Activated CD4-positive, alpha-beta T cell treated with anti-CD3 and anti-CD28 coated beads for 36 hours (primary cell): ENCODE measurements at regions of chr19 and their contacts with region 1.

Region 1: DNA sequence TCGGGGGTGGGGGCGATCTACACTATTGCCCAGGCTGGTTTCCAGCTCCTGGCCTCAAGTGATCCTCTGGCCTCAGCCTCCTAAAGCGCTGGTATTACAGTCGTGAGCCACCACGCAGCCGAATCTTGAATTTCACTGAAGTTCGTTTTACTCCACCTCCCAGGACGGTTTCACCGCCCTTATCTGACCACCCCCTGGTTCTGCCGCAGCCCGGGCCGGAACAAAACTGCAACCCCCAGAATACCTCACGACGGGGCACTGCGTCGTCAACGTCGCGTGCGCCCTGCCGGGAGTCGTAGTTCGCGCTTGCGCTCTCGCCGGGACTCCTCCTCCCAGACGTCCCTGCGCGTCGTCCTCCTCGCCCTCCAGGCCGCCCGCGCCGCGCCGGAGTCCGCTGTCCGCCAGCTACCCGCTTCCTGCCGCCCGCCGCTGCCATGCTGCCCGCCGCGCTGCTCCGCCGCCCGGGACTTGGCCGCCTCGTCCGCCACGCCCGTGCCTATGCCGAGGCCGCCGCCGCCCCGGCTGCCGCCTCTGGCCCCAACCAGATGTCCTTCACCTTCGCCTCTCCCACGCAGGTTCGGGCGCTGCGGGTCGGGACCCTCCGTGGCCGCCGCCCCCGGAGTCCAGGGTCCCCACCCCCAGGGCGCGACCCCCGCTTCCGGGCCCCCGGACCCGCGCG is at the start of gene ATP5F1D:
- DNase-seq: peak; percentile 96
- ATAC-seq: peak; percentile 79
- H3K4me3 Mint-ChIP-seq: peak within 1 kb of the TSS; percentile 83
- H3K27ac Mint-ChIP-seq: peak within 1 kb of the TSS; percentile 86
- H3K4me1 Mint-ChIP-seq: peaks cover 38% of the 10 kb centered on the region
- H3K27me3 Mint-ChIP-seq: peaks cover 6% of the 10 kb centered on the region
- total RNA-seq, gene ATP5F1D: 161 to 180 TPM

Region 2: GRCh38 chr19:925526-926322 is 315.8 kb before region 1 on chr19 and contains the start of gene ARID3A:
- CTCF ChIA-PET with region 1: no interaction called
- POLR2A ChIA-PET with region 1: no interaction called
- intact Hi-C with region 1: loop called (anchors 1 to 10 kb)
- DNase-seq: peak; percentile 85
- ATAC-seq: peak; percentile 42
- H3K4me3 Mint-ChIP-seq: peak within 1 kb of the TSS; percentile 70
- H3K27ac Mint-ChIP-seq: peak within 1 kb of the TSS; percentile 37
- H3K4me1 Mint-ChIP-seq: peaks cover 17% of the 10 kb centered on the region
- H3K27me3 Mint-ChIP-seq: no peaks in the 10 kb centered on the region
- total RNA-seq, gene ARID3A: 25.1 to 36.0 TPM

Region 3: DNA sequence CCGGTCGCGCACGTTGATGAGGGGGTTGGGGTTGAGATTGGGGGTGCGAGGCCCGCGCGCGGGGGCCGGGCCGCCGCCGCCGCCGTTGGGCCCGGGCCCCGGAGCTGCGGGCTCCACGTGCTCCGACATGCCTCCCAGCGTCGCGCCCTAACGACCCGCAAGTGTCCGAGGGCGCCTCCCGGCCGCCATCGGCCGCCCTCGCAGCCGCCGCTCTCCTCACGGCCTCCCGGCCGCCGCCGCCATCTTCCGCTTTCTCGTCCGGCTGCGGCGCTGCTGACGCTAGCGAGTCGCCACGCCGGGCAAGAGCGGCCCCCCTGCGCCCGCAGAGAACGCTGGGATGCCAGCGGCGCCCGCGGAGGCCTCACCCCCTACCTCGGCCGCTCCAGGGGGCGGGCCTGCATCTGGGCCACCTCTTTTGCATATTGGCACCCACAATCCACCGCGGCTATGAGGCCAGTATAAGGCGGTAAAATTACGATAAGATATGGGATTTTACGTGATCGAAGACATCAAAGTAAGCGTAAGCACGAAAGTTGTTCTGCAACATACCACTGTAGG is 220.6 kb before region 1 on chr19 and contains the start of gene TMEM259:
- CTCF ChIA-PET with region 1: interaction called, 5 read pairs
- POLR2A ChIA-PET with region 1: interaction called, 4 read pairs
- intact Hi-C with region 1: loop called (anchors 1 kb)
- DNase-seq: peak; percentile 99
- ATAC-seq: peak; percentile 90
- H3K4me3 Mint-ChIP-seq: peak within 1 kb of the TSS; percentile 94
- H3K27ac Mint-ChIP-seq: peak within 1 kb of the TSS; percentile 96
- H3K4me1 Mint-ChIP-seq: peaks cover 35% of the 10 kb centered on the region
- H3K27me3 Mint-ChIP-seq: no peaks in the 10 kb centered on the region
- total RNA-seq, gene TMEM259: 106 to 128 TPM

Region 4: DNA sequence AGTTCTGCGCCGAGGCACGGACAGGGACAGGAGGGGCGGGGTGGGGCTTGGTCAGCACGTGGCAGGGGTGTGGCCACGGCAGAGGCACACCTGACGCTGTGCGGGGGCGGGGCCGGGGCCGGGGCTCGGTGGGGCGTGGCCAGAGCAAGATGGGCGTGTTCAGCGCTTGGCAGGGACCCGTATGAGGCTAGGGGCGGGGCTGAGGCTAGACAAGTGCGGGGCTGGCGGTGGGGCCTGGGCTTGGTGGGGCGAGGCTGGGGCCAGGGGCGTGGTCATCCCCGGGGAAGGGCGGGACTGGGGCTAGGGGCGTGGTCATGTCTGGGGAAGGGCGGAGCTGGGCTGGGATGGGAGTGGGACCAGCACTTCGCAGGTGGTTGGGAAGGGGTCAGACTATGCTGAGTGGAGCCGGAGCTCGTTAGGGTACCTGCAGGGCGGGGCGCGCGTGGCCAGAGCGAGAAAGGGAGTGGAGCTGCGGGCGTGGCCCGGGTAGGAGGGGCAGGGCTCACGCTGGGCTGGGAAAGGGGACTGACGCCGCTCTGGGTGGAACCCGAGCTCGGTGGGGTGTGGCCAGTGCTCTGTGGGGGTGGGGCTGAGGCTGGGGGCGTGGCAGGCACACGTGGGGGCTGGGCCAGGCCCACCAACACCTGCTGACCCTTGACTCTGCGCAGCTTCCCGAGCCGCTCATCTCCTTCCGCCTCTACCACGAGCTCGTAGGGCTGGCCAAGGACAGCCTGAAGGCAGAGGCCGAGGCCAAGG is 159.2 kb before region 1 on chr19:
- CTCF ChIA-PET with region 1: no interaction called
- POLR2A ChIA-PET with region 1: interaction called, 6 read pairs
- intact Hi-C with region 1: loop called in 1 of 2 experiments (anchors 2 kb)
- DNase-seq: peak; percentile 96
- ATAC-seq: peak; percentile 71
- H3K4me3 Mint-ChIP-seq: no peak overlapping the region
- H3K27ac Mint-ChIP-seq: no peak overlapping the region
- H3K4me1 Mint-ChIP-seq: peaks cover 60% of the 10 kb centered on the region
- H3K27me3 Mint-ChIP-seq: no peaks in the 10 kb centered on the region

Region 5: GRCh38 chr19:1113033-1113985 is 128.2 kb before region 1 on chr19:
- CTCF ChIA-PET with region 1: interaction called, 5 read pairs
- POLR2A ChIA-PET with region 1: no interaction called
- intact Hi-C with region 1: loop called in 1 of 2 experiments (anchors 1 kb)
- DNase-seq: peak; percentile 94
- ATAC-seq: peak; percentile 89
- H3K4me3 Mint-ChIP-seq: no peak overlapping the region
- H3K27ac Mint-ChIP-seq: no peak overlapping the region
- H3K4me1 Mint-ChIP-seq: no peaks in the 10 kb centered on the region
- H3K27me3 Mint-ChIP-seq: no peaks in the 10 kb centered on the region

Region 6: GRCh38 chr19:1205114-1206062 is 36.2 kb before region 1 on chr19 and contains the start of gene STK11:
- CTCF ChIA-PET with region 1: interaction called, 5 read pairs
- POLR2A ChIA-PET with region 1: no interaction called
- intact Hi-C with region 1: loop called in 1 of 2 experiments (anchors 1 kb)
- DNase-seq: peak; percentile 100
- ATAC-seq: peak; percentile 97
- H3K4me3 Mint-ChIP-seq: peak within 1 kb of the TSS; percentile 93
- H3K27ac Mint-ChIP-seq: peak within 1 kb of the TSS; percentile 77
- H3K4me1 Mint-ChIP-seq: peaks cover 23% of the 10 kb centered on the region
- H3K27me3 Mint-ChIP-seq: no peaks in the 10 kb centered on the region
- total RNA-seq, gene STK11: 49.2 to 61.5 TPM

Region 7: DNA sequence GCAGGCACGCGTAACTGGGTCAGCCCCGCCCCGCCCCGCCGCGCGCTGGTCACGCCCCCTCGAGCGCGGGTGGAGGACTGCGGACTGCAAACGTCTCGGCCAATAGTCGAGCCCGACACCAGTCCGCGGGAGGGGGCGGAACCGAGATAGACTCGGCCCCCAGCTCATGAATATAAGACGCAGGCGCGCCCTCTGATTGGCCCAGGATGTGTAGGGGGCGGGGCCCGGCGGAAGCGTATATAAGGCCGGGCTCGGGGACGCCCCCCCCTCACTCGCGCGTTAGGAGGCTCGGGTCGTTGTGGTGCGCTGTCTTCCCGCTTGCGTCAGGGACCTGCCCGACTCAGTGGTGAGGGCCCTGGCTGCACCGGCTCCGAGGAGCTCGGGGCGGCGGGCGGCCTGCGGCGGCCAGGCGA is 27.5 kb after region 1 on chr19 and contains the start of gene CIRBP:
- CTCF ChIA-PET with region 1: interaction called, 163 read pairs
- POLR2A ChIA-PET with region 1: interaction called, 59 read pairs
- intact Hi-C with region 1: loop called (anchors 1 kb)
- DNase-seq: peak; percentile 100
- ATAC-seq: peak; percentile 87
- H3K4me3 Mint-ChIP-seq: peak within 1 kb of the TSS; percentile 84
- H3K27ac Mint-ChIP-seq: peak within 1 kb of the TSS; percentile 87
- H3K4me1 Mint-ChIP-seq: peaks cover 66% of the 10 kb centered on the region
- H3K27me3 Mint-ChIP-seq: no peaks in the 10 kb centered on the region
- total RNA-seq, gene CIRBP: 123 to 188 TPM